ENCODE measurements at regions of chr9 and their contacts with region 1.

Region 1: DNA sequence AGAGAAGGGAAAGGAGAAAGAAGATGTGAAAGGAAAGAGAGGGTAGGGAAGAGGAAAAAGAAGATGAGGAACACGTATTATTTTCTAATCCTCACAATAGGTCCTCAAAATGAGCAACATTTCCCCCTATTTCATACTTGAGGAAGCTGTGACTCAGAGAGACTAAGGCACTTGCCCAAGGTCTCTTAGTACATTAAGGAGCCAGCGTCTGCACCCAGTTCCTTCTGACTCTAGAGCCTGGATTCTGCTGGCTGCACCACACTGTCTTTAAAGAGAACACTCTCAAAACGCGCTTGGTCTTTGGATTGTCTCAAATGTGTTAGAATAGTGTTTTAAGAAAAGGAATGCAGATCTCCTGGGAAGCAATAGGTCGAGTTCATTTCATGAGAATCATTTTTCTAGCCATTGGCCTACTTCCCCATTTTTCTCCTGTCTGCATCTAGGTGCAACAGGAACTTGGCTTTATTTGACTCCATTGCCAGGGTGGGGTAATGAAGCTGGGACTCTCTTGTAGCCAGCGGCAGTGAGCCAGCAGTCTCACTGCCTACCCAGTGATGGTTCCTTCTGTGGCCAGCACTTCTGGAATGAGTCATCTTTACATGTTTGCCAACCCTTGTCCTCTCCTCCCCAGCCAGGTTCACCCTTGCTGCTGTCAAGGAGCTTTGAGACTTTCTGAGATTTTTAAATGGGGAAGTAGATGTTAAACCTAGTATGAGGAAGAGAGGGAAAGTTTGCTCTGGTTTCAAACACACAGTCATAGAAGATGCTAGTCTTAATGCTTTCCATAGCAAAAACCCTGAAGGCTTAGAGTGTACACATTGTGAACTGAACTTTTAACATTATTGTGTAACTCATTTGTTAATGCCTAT is 82.7 kb downstream of the DOCK8 start:
- DNase-seq: peak; percentile 81
- ATAC-seq: peak; percentile 94
- H3K4me3 ChIP-seq: peak overlapping the region in 2 of 5 experiments; percentile 5 to 8
- H3K4me3 Mint-ChIP-seq: peak overlapping the region; percentile 63
- H3K27ac ChIP-seq: peak overlapping the region; percentile 34 to 80
- H3K27ac Mint-ChIP-seq: peak overlapping the region; percentile 76
- H3K4me1 ChIP-seq: peaks cover 18 to 19% of the 10 kb centered on the region in 2 donors
- H3K4me1 Mint-ChIP-seq: peaks cover 28% of the 10 kb centered on the region
- H3K27me3 ChIP-seq: no peaks in the 10 kb centered on the region
- H3K27me3 Mint-ChIP-seq: no peaks in the 10 kb centered on the region
- CTCF ChIP-seq: no peak

Region 2: DNA sequence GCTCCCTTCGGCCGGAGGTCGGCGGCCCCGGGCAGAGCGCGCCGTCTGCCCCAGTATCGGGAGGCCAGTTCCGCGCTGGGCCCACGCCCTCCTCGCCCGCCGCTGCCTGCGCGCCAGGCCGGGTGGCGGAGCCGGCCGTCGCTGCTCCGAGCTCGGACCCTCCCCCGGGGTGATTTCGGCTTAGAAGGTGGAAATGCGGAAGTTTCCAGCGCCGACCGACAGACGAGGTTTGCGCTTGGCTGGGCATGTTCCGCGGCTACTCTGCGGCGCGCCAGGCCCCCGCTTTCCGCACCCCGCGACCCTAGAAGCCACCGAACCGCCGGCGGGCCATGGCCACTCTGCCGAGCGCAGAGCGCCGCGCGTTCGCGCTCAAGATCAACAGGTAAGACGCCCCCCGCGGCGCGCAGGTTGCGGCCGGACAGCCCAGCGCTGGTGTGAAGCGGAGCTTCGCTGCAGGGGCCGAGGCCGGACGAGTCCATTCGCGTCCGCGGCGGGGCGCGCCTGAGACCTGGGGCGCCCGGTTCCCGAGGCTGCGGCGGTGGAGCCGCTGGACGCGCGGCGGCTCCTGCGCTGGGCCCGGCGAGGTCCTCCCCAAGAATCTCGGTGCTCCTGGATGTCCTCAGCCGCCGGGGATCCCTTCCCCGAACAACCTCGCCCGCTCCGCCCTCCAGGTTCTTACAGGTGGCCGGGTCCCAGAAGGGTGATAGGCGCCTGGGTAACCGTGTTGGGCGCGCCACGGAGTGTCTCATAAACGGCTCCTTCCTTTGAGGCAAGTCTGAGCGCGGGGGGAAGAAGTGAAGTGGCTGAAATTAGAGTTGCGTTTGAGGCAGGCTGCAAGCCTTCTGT is 82.5 kb before region 1 on chr9 and contains the start of gene DOCK8:
- CTCF ChIA-PET with region 1: interaction called, 11 read pairs
- POLR2A ChIA-PET with region 1: interaction called, 10 read pairs
- intact Hi-C with region 1: loop called (anchors 1 kb)
- DNase-seq: peak; percentile 91
- ATAC-seq: peak; percentile 81
- H3K4me3 ChIP-seq: peak within 1 kb of the TSS; percentile 67 to 93 (median 79)
- H3K4me3 Mint-ChIP-seq: peak within 1 kb of the TSS; percentile 94
- H3K27ac ChIP-seq: peak within 1 kb of the TSS; percentile 61 to 90
- H3K27ac Mint-ChIP-seq: peak within 1 kb of the TSS; percentile 97
- H3K4me1 ChIP-seq: peaks cover 27 to 37% of the 10 kb centered on the region in 2 donors
- H3K4me1 Mint-ChIP-seq: peaks cover 41% of the 10 kb centered on the region
- H3K27me3 ChIP-seq: no peaks in the 10 kb centered on the region
- H3K27me3 Mint-ChIP-seq: no peaks in the 10 kb centered on the region
- CTCF ChIP-seq: peak; percentile 53
- total RNA-seq, gene DOCK8: 288 and 297 TPM in 2 replicates

Region 3: DNA sequence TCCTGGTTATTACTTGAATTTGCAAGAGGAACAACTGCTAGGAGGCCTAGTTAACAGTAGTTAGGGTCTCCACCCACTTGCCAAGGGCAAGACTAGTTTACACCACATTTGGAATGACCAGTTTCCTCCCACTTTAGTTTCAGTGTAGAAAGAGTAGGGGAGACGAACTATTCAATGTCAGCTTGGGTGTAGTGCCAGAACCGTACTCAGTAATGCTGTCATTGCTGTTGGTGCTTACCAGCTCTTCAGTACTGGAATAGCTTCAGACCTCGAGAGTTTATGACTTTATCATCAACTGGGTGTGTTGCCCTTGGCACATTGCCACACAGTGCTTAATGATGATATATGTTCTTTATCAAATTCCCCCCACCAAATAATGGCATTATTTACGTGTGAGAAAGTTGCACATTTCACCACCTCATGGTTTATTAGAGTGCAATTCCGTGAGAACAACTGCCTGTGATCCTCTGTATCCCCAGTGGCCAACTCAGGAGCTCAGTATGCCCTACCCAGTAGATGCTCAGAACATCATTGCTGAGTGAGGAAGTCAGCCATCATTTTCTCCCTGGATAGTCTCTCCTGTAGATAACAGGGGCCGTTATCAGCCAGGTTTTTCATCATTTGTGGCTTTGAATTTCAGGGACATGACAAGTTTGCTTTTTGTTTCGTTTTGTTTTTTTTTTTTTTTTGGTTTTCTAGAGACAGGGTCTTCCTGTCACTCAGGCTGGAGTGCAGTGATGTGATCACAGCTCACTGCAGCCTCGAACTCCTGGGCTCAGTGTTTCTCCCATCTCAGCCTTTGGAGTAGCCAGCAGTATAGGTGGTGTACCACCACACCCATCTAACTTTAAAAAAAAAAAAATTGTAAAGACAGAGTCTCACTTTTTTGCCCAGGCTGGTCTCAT is 15.3 kb before region 1 on chr9:
- CTCF ChIA-PET with region 1: interaction called, 19 read pairs
- POLR2A ChIA-PET with region 1: no interaction called
- intact Hi-C with region 1: loop called (anchors 2 kb)
- DNase-seq: peak; percentile 24
- ATAC-seq: peak; percentile 36
- H3K4me3 ChIP-seq: peak overlapping the region in 2 of 5 experiments; percentile 0 to 1
- H3K4me3 Mint-ChIP-seq: peak overlapping the region; percentile 86
- H3K27ac ChIP-seq: peak overlapping the region; percentile 56 to 74
- H3K27ac Mint-ChIP-seq: peak overlapping the region; percentile 91
- H3K4me1 ChIP-seq: peaks cover 52 to 65% of the 10 kb centered on the region in 2 donors
- H3K4me1 Mint-ChIP-seq: peaks cover 35% of the 10 kb centered on the region
- H3K27me3 ChIP-seq: no peaks in the 10 kb centered on the region
- H3K27me3 Mint-ChIP-seq: no peaks in the 10 kb centered on the region
- CTCF ChIP-seq: no peak

Region 4: GRCh38 chr9:419571-420402 is 122.4 kb after region 1 on chr9:
- CTCF ChIA-PET with region 1: no interaction called
- POLR2A ChIA-PET with region 1: no interaction called
- intact Hi-C with region 1: no loop called
- DNase-seq: no peak
- ATAC-seq: no peak
- H3K4me3 ChIP-seq: no peak overlapping the region
- H3K4me3 Mint-ChIP-seq: no peak overlapping the region
- H3K27ac ChIP-seq: no peak overlapping the region
- H3K27ac Mint-ChIP-seq: no peak overlapping the region
- H3K4me1 ChIP-seq: no peaks in the 10 kb centered on the region
- H3K4me1 Mint-ChIP-seq: no peaks in the 10 kb centered on the region
- H3K27me3 ChIP-seq: no peaks in the 10 kb centered on the region
- H3K27me3 Mint-ChIP-seq: no peaks in the 10 kb centered on the region
- CTCF ChIP-seq: no peak